PC-9 (cell line): ENCODE measurements at regions of chr1 and their contacts with region 1.

Region 1: GRCh38 chr1:236868625-236869467 is 73.8 kb downstream of the MTR start:
- DNase-seq: peak; percentile 19 to 49
- H3K4me3 ChIP-seq: no peak overlapping the region
- H3K27ac ChIP-seq: no peak overlapping the region
- H3K4me1 ChIP-seq: no peaks in the 10 kb centered on the region
- H3K27me3 ChIP-seq: no peaks in the 10 kb centered on the region
- CTCF ChIP-seq: peak; percentile 97

Region 2: GRCh38 chr1:236103646-236104218 is 765.1 kb before region 1 on chr1:
- CTCF ChIA-PET with region 1: no interaction called
- POLR2A ChIA-PET with region 1: no interaction called
- intact Hi-C with region 1: loop called (anchors 2 kb)
- DNase-seq: peak in 1 of 2 experiments; percentile 41
- H3K4me3 ChIP-seq: no peak overlapping the region
- H3K27ac ChIP-seq: no peak overlapping the region
- H3K4me1 ChIP-seq: no peaks in the 10 kb centered on the region
- H3K27me3 ChIP-seq: no peaks in the 10 kb centered on the region
- CTCF ChIP-seq: peak; percentile 96

Region 3: GRCh38 chr1:236759252-236759859 is 109.5 kb before region 1 on chr1:
- CTCF ChIA-PET with region 1: no interaction called
- POLR2A ChIA-PET with region 1: no interaction called
- intact Hi-C with region 1: loop called (anchors 2 kb)
- DNase-seq: no peak
- H3K4me3 ChIP-seq: no peak overlapping the region
- H3K27ac ChIP-seq: no peak overlapping the region
- H3K4me1 ChIP-seq: no peaks in the 10 kb centered on the region
- H3K27me3 ChIP-seq: peaks cover 76% of the 10 kb centered on the region
- CTCF ChIP-seq: peak; percentile 79